ENCODE measurements at regions of chrX and their contacts with region 1.

Region 1: DNA sequence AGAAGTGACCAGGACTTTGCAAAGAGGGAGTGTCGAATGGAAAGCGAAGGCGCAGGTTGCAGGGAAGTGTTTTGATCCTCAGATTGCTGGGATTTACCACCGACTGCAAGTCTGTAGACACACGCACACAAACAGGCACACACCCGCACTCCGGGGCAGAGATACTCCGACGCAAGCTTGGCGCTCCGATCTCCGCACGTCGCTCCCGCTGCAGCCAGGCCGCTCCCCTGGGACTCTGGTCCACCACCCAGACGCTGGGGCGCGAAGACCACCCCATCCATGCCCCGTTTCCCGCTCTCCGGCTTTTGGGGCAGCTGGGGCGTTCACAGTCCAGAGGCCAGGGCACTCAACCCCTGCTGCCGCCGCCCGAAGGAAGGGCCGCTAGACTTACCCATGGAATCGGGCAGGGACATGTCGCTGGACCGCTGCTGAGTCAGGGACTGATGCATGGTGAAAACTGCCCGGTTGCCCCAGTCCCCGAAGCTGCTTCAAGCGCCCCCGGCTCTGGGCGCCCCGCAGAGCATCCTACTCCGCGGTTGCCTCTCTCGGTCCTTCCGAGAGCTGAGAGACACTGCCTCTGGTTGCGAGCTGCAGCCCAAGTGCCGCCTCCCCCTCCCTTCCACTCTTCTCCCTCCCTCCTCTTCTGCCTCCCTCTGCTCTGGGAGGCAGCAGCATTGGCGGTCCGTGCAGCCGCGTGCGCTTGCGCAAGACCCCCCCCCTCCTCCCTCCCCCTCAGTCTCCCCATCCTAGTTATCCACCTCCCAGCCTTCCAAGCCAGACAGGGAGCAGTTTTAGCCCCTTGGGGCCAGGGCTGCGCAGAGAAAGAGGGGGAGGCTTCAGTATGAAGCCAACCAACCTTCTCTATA is at the start of gene TMEM255A:
- DNase-seq: no peak
- H3K4me3 ChIP-seq: peak within 1 kb of the TSS; percentile 52 to 61
- H3K27ac ChIP-seq: no peak within 1 kb of the TSS
- H3K4me1 ChIP-seq: no peaks in the 10 kb centered on the region
- H3K27me3 ChIP-seq: peaks cover 4% of the 10 kb centered on the region
- CTCF ChIP-seq: no peak
- total RNA-seq, gene TMEM255A: not detected

Region 2: GRCh38 chrX:120111611-120112010 is 199.5 kb before region 1 on chrX:
- intact Hi-C with region 1: no loop called
- DNase-seq: no peak
- H3K4me3 ChIP-seq: no peak overlapping the region
- H3K27ac ChIP-seq: no peak overlapping the region
- H3K4me1 ChIP-seq: no peaks in the 10 kb centered on the region
- H3K27me3 ChIP-seq: no peaks in the 10 kb centered on the region
- CTCF ChIP-seq: no peak

Region 3: GRCh38 chrX:120463241-120463640 is 152.1 kb after region 1 on chrX:
- intact Hi-C with region 1: loop called (anchors 5 kb)
- DNase-seq: no peak
- H3K4me3 ChIP-seq: no peak overlapping the region
- H3K27ac ChIP-seq: no peak overlapping the region
- H3K4me1 ChIP-seq: no peaks in the 10 kb centered on the region
- H3K27me3 ChIP-seq: no peaks in the 10 kb centered on the region
- CTCF ChIP-seq: no peak

Measured in ascending aorta (tissue), 2 donors.